Dendritic cell treated with granulocyte-macrophage colony-stimulating factor and Interleukin-4, amounts not matched to agents 40 ng/mL and 50 ng/mL, for 4 days (primary cell): ENCODE measurements at regions of chr16 and their contacts with region 1.

Region 1: GRCh38 chr16:75432828-75433731 is at the start of gene CFDP1:
- H3K4me3 Mint-ChIP-seq: peak within 1 kb of the TSS; percentile 92
- H3K27ac Mint-ChIP-seq: peak within 1 kb of the TSS; percentile 96
- H3K4me1 Mint-ChIP-seq: peaks cover 43% of the 10 kb centered on the region
- H3K27me3 Mint-ChIP-seq: peaks cover 7% of the 10 kb centered on the region

Region 2: GRCh38 chr16:75385507-75386152 is 47.5 kb before region 1 on chr16:
- intact Hi-C with region 1: no loop called
- H3K4me3 Mint-ChIP-seq: no peak overlapping the region
- H3K27ac Mint-ChIP-seq: no peak overlapping the region
- H3K4me1 Mint-ChIP-seq: peaks cover 9% of the 10 kb centered on the region
- H3K27me3 Mint-ChIP-seq: peaks cover 86% of the 10 kb centered on the region

Region 3: GRCh38 chr16:75519881-75520280 is 86.8 kb after region 1 on chr16:
- intact Hi-C with region 1: loop called (anchors 2 kb)
- H3K4me3 Mint-ChIP-seq: no peak overlapping the region
- H3K27ac Mint-ChIP-seq: no peak overlapping the region
- H3K4me1 Mint-ChIP-seq: peaks cover 12% of the 10 kb centered on the region
- H3K27me3 Mint-ChIP-seq: peaks cover 13% of the 10 kb centered on the region

Region 4: DNA sequence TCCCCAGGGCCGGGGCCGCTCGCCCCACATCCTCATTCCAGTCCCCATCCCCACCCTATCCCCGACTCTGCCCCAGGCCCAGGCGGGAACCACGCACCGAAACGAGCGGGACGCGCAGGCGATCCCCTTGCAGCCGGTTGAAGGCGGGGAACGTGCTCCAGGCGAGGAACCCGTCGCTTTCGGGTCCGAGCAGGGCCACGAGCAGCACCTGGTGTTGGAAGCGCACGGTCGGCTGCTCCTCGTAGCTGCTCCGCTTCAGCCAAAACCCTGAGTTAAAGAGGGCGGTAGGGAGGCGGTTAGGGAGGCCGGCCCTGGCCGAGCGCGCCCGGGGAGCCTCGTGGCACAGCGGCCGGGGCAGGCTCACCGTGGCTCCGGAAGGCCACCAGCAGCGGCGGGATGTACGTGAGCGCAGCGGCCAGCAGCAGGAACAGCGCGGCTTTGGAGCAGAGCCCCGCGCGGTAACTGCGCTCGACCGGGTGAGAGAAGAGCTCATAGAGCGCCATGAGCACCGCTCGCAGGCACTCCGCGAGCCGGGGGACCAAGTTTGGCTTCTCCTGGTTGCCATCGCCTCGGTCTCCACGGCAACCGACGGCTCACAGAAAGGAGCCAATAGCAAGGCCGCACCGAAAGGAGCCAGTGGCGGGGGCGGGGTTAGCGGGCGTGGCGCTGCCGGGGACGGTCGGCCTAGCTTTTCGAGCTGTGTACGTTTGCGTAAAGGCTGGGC is 122.8 kb after region 1 on chr16 and contains the start of gene TMEM231:
- intact Hi-C with region 1: loop called (anchors 10 kb)
- H3K4me3 Mint-ChIP-seq: peak within 1 kb of the TSS; percentile 82
- H3K27ac Mint-ChIP-seq: peak within 1 kb of the TSS; percentile 67
- H3K4me1 Mint-ChIP-seq: peaks cover 16% of the 10 kb centered on the region
- H3K27me3 Mint-ChIP-seq: peaks cover 32% of the 10 kb centered on the region

Region 5: DNA sequence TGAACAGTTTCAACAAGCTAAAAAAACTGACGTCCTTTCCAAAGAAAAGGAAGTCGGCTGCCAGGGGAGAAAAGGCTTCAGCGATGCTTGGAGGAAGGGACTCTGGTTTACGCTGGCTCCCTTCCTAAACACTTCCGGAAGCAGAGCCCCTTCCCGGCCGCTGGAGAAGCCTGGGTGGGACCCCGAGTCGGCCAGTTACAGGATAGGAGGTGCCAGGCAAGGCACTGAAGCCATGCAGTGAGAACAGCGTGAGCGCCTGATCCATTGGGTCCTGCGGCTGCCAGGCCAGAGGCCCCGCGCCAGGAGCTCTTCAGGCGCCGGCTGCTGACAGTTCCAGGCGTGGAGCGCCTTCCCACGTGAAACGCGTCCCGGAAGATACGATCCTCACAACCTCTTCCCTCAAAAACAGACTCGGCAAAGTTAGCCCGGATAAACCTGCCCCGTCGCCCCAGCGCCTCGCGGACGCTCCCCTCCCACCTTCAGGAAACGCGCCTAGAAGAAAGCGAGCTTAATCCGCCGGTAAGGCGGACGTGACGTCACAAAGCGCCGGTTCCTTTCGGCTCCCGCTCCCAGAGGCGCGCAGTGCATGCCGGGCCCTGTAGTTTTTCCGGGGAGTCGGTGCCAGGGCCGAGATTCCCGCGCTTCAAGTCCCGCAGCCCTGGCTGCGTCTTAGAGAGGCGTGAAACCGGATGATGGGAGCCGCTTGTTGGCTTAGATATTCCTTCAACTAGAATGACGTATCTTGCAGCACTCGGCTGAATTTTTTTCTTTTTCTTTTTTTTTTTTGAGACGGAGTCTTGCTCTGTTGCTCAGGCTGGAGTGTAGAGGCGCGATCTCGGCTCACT is 189.9 kb after region 1 on chr16 and contains the start of gene ADAT1:
- intact Hi-C with region 1: loop called (anchors 1 kb)
- H3K4me3 Mint-ChIP-seq: peak within 1 kb of the TSS; percentile 88
- H3K27ac Mint-ChIP-seq: peak within 1 kb of the TSS; percentile 97
- H3K4me1 Mint-ChIP-seq: peaks cover 28% of the 10 kb centered on the region
- H3K27me3 Mint-ChIP-seq: no peaks in the 10 kb centered on the region